ENCODE measurements at regions of chr2 and their contacts with region 1.

Region 1: DNA sequence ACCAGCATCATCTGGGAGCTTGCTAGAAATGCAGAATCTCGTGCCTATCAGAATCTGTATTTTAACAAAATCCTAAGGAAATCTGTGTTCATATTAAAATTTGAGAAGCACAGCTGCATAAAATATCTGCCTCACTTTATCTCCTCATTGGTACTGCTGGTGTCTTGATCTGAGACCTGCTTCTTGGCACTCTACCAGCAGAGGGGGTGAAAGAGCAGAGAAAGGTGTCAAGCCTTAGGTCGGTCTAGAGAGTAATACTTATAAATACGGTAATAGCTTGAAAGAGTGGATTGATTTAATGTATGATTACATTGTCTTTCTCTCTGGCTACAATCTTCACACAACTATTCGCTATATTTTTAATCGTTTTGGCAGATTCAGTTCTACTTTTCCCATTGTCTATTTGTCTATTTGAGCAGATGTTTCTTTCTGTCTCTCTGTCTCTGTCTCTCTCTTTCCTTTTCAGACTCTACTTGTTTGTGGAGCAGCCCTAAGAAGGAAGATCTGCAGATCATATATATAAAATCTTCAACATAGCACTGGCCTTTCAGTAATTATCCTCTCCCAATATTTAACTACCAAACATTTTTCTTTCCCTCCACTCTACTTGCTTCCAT is 1.7 kb upstream of the GCG start:
- DNase-seq: peak; percentile 77
- ATAC-seq: peak; percentile 99
- H3K4me3 Mint-ChIP-seq: no peak overlapping the region
- H3K27ac Mint-ChIP-seq: no peak overlapping the region
- H3K4me1 Mint-ChIP-seq: peaks cover 4% of the 10 kb centered on the region
- H3K27me3 Mint-ChIP-seq: peaks cover 56% of the 10 kb centered on the region

Region 2: DNA sequence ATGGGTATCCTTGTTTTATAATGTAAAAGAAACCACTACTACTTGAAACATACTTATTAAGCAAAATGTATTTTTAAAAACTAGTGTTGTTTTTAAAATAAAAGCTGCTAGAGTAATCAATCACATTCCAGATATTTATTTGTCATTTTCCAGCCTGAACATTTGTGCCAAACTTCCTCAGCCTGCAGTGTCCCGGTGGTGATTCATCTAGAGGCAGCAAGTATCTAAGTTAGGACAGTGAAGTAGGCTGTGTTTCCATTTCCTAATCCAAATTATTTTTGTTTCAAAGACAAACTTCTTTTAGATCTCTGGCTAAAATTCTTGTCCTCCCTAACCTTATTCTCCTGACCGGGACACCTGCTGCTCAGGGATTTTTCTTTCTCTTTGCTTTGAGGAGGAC is 11.1 kb after region 1 on chr2:
- CTCF ChIA-PET with region 1: interaction called, 11 read pairs
- DNase-seq: no peak
- ATAC-seq: no peak
- H3K4me3 Mint-ChIP-seq: no peak overlapping the region
- H3K27ac Mint-ChIP-seq: no peak overlapping the region
- H3K4me1 Mint-ChIP-seq: peaks cover 7% of the 10 kb centered on the region
- H3K27me3 Mint-ChIP-seq: peaks cover 33% of the 10 kb centered on the region

Region 3: DNA sequence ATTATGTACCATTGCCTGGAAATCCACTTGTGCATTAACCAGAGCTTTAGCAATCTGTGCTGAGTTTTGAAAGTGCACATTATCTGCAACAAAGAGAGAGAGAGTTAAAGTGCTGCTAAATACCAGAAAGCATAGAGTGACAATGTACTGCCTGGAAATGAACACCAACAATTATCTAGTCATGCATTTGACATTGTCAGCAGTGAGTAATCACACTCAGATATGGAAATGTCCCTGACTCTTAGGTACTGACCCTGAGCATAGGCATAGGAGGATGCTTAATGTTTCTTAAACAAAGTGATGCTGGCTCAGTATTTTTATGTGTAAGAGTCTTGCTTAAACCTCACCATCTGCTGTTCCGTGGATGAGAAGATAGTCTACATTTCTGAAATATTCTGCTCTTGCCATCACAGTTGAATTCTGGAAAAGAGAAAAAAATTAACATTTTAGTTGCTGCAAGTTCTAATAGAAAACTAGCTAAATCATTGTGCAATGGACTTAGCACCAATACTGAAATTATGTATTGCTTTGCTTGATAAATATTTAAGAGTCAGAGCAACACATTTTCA is 19.2 kb after region 1 on chr2:
- CTCF ChIA-PET with region 1: interaction called, 12 read pairs
- DNase-seq: no peak
- ATAC-seq: no peak
- H3K4me3 Mint-ChIP-seq: no peak overlapping the region
- H3K27ac Mint-ChIP-seq: no peak overlapping the region
- H3K4me1 Mint-ChIP-seq: peaks cover 18% of the 10 kb centered on the region
- H3K27me3 Mint-ChIP-seq: peaks cover 57% of the 10 kb centered on the region

Region 4: DNA sequence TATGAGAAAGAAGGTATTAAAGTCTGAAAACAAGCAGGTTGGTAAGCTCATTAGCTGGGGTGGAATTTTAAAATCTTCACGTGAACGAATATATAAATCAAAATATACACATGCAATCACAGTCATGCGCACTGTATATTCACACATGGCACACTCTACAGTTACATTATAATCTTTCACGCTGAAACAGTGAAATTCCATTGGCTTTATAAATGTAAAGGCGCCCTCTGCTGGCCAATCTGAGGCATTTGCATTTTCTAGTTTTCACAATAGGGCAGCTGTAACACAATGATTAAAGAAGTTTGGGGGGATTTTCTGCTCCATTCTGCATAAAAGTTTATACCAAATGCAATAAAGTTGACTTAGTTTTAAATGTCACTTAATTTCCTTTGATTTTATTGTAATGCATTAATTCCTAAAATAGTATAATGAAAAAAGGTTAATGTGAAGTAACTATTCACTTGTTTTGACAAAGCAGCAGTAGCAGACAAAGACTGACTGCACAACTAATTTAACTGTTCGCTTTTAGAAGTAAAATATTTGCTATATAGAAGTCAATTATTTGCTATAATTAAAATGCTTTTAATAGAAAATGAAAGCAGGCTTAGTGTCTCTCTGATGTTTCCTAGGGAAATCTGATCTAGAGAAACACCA is 147.6 kb after region 1 on chr2:
- CTCF ChIA-PET with region 1: interaction called, 36 read pairs
- DNase-seq: peak; percentile 63
- ATAC-seq: peak; percentile 81
- H3K4me3 Mint-ChIP-seq: no peak overlapping the region
- H3K27ac Mint-ChIP-seq: no peak overlapping the region
- H3K4me1 Mint-ChIP-seq: peaks cover 6% of the 10 kb centered on the region
- H3K27me3 Mint-ChIP-seq: no peaks in the 10 kb centered on the region